Motor neuron (in vitro differentiated cells): ENCODE measurements at regions of chr4 and their contacts with region 1.

Region 1: GRCh38 chr4:176319704-176320339 is at the start of gene SPCS3:
- ATAC-seq: peak; percentile 83 to 94 (median 92)
- H3K4me3 ChIP-seq: peak within 1 kb of the TSS; percentile 74 to 92 (median 82)
- H3K27ac ChIP-seq: peak within 1 kb of the TSS; percentile 67 to 84
- H3K4me1 ChIP-seq: peaks cover 0 to 21% of the 10 kb centered on the region in 2 donors
- total RNA-seq, gene SPCS3: 46.2 to 83.5 (median 58.5) TPM

Region 2: DNA sequence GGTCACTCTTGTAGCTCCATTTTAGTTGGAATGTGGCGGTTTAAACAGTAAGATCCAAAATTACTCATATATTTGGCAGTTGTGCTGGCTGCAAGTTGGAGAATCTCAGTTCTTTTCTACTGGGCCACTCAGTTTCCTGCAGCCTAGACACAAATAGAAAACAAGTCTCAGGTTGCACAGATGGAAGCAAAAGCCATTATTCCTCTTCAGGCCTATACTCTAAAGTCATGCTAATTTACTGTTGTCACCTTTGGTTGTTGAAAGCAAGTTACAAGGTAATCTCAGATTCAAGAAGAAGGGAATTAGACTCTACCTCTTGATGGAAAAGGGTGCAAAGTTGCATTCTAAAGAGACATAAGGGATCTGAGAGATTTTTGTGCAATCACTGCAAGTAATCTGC is 1056.3 kb before region 1 on chr4:
- in situ Hi-C with region 1: no loop called
- ATAC-seq: no peak
- H3K4me3 ChIP-seq: no peak overlapping the region
- H3K27ac ChIP-seq: no peak overlapping the region
- H3K4me1 ChIP-seq: no peaks in the 10 kb centered on the region

Region 3: DNA sequence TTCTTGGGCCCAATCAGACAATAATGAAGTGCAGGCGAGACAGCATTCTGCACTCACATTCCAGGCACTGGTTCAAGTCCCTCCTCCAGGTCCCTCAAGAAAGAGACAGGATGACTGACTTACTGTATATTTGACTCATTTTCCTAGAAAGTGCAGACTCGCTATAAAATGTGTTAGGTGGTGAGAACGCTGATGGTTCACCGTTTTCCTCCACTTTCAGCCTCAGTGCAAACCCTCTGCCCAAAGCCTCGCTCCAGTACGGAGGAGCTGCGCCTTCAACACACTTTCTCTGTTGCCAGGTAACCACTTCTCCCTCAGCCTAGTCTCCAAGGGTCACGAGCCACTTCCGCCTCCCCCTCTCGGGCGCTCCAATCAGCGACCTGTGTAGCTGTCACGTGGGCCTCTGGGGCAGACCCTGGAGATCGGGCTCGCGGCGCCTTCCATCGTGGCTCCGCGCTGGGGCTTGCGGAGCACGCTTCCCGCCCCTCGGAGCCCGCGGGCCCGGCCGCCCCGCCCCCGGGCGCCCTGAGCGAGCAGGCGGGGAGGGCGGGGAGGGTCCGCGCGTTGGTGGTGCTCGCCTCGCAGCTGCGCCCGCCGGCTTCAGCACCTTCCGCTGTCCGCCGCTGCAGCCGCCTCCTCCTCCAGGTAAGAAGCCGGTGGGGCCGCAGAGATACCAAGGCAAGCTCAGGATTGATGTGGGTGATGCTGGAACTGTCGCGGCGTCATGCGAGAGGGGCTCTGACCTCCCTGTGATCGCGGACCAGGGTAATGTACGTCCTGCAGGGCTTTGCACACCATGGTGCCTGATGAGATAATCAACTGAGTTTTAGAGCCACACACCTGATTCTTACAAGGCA is 254.2 kb before region 1 on chr4 and contains the start of gene WDR17:
- in situ Hi-C with region 1: loop called in 3 of 9 experiments (anchors 25 kb)
- ATAC-seq: peak; percentile 97 to 99 (median 98)
- H3K4me3 ChIP-seq: peak within 1 kb of the TSS; percentile 55 to 64 (median 62)
- H3K27ac ChIP-seq: peak within 1 kb of the TSS; percentile 72 to 76
- H3K4me1 ChIP-seq: peaks cover 4 to 5% of the 10 kb centered on the region in 2 donors
- total RNA-seq, gene WDR17: 1.3 to 23.5 (median 12.8) TPM